Sciatic nerve (tissue), 2 donors: ENCODE measurements at regions of chr2 and their contacts with region 1.

Region 1: GRCh38 chr2:79131687-79132086 is 11.4 kb downstream of the REG1A start:
- DNase-seq: no peak
- ATAC-seq: no peak

Region 2: DNA sequence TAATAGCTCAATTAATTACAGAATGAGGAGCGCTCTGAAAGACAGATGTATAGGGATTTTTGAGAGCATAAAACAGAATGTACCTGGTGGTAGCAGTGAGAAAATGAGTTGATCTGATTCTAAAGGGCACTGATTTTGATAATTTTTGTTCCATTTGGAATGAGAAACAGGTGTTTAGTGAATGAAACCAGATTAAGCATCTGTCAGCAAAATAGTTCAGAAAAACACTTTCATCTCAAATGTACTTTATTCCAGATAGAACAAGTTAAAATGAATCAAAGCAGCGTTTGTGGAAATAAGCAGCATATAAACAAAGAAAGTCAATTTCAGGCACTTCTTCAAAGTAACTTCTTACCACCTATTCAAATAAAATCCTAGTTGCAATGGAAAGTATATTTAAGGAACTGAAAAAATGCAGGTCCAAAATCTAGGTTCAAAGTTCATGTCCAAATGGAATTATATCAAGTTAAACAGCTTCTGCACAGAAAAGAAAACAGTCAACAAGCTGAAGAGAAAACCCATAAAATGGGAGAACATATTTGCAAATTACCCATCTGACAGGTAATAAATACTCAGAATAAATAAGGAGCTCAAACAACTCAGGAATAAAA is 39.8 kb after region 1 on chr2:
- intact Hi-C with region 1: loop called (anchors 1 kb)
- DNase-seq: no peak
- ATAC-seq: no peak

Region 3: GRCh38 chr2:79940364-79940763 is 808.7 kb after region 1 on chr2:
- intact Hi-C with region 1: no loop called
- DNase-seq: no peak
- ATAC-seq: no peak